IMR-90 (cell line): ENCODE measurements at regions of chr1 and their contacts with region 1.

Region 1: DNA sequence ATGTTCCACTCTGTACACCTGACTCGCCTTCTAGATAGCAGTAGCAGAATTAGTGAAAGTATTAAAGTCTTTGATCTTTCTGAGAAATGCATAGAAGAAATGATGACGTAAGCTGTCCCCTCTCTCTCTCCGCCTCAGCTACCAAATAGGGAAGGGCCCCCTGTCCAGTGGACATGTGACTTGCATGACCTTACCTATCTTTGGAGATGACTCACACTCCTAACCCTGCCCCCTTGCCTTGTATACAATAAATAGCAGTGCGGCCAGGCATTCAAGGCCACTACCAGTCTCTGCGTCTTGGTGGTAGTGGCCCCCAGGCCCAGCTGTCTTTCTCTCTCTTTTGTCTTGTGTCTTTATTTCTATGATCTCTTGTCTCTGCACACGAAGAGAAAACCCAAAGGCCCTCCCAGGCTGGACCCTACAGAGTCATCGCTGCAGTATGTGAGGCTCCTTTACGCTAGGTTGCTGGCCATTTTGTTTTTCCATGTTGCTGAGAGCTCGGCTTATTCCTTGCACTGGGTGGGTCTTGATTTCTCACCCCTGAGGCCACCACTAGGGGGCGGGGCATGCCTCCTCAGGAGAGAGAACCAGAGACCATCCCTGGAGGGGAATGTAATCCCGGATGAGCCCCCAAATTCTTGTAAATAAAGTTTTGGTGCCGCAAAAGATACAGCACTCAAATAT is 16.0 kb upstream of the ZBTB8B start:
- DNase-seq: no peak
- ATAC-seq: no peak
- H3K4me3 ChIP-seq: no peak overlapping the region
- H3K27ac ChIP-seq: no peak overlapping the region
- H3K4me1 ChIP-seq: 0 out of 2 replicates have a peak, but pooled peaks cover 2% of the 10 kb centered on the region
- H3K27me3 ChIP-seq: peaks cover 4% of the 10 kb centered on the region
- CTCF ChIP-seq: no peak
- POLR2A ChIP-seq: no peak
- RAD21 ChIP-seq: no peak

Region 2: GRCh38 chr1:31991182-31991581 is 457.7 kb before region 1 on chr1:
- CTCF ChIA-PET with region 1: no interaction called
- POLR2A ChIA-PET with region 1: no interaction called
- dilution Hi-C with region 1: no loop called
- in situ Hi-C with region 1: no loop called
- intact Hi-C with region 1: no loop called
- DNase-seq: no peak
- ATAC-seq: no peak
- H3K4me3 ChIP-seq: no peak overlapping the region
- H3K27ac ChIP-seq: no peak overlapping the region
- H3K4me1 ChIP-seq: no peaks in the 10 kb centered on the region
- H3K27me3 ChIP-seq: peaks cover 4% of the 10 kb centered on the region
- CTCF ChIP-seq: no peak
- POLR2A ChIP-seq: no peak
- RAD21 ChIP-seq: no peak

Region 3: DNA sequence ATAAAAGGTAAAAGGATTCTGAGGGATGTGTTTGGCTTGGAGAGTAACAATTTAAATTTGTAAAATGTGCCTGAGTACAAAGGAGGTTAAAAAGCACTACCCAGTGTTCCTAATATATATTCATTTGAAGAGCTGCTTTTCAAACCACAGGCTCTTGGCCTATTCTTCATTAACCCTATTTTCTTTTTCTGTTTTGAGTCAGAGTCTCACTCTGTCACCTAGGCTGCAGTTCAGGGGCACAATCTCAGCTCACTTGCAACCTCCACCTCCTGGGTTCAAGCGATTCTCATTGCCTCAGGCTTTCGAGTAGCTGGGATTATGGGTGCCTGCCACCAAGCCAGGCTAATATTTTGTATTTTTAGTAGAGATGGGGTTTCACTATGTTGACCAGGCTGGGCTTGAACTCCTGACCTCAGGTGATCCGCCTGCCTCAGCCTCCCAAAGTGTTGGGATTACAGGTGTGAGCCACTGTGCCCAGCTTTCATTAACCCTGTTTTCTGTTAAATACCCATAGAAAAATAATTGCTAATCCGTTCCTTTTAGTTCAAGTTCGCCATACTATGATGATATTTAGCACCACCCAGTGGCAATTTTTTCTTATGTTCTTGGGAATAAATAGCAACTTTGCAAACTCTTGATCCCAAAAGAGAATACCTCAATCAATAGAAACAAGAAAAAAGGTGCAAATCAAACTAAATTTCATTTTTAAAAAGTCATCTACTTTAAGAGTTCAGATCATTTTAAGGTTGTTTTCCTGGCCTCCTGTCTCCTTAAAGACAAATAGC is 171.0 kb after region 1 on chr1:
- CTCF ChIA-PET with region 1: no interaction called
- POLR2A ChIA-PET with region 1: no interaction called
- dilution Hi-C with region 1: no loop called
- in situ Hi-C with region 1: no loop called
- intact Hi-C with region 1: loop called (anchors 5 kb)
- DNase-seq: peak; percentile 29
- ATAC-seq: no peak
- H3K4me3 ChIP-seq: no peak overlapping the region
- H3K27ac ChIP-seq: no peak overlapping the region
- H3K4me1 ChIP-seq: no peaks in the 10 kb centered on the region
- H3K27me3 ChIP-seq: no peaks in the 10 kb centered on the region
- CTCF ChIP-seq: peak; percentile 32
- POLR2A ChIP-seq: no peak
- RAD21 ChIP-seq: no peak

Region 4: GRCh38 chr1:32650752-32651460 is 202.0 kb after region 1 on chr1 and contains the start of gene RBBP4:
- CTCF ChIA-PET with region 1: no interaction called
- POLR2A ChIA-PET with region 1: interaction called, 3 read pairs
- dilution Hi-C with region 1: no loop called
- in situ Hi-C with region 1: no loop called
- intact Hi-C with region 1: loop called (anchors 2 kb)
- DNase-seq: peak; percentile 96
- ATAC-seq: peak; percentile 95
- H3K4me3 ChIP-seq: peak within 1 kb of the TSS; percentile 97
- H3K27ac ChIP-seq: peak within 1 kb of the TSS; percentile 96
- H3K4me1 ChIP-seq: peaks cover 3% of the 10 kb centered on the region; the same call in 1 of the 2 replicates
- H3K27me3 ChIP-seq: no peaks in the 10 kb centered on the region
- CTCF ChIP-seq: no peak
- POLR2A ChIP-seq: peak; percentile 5
- RAD21 ChIP-seq: no peak
- total RNA-seq, gene RBBP4: 138 and 161 TPM in 2 replicates

Region 5: DNA sequence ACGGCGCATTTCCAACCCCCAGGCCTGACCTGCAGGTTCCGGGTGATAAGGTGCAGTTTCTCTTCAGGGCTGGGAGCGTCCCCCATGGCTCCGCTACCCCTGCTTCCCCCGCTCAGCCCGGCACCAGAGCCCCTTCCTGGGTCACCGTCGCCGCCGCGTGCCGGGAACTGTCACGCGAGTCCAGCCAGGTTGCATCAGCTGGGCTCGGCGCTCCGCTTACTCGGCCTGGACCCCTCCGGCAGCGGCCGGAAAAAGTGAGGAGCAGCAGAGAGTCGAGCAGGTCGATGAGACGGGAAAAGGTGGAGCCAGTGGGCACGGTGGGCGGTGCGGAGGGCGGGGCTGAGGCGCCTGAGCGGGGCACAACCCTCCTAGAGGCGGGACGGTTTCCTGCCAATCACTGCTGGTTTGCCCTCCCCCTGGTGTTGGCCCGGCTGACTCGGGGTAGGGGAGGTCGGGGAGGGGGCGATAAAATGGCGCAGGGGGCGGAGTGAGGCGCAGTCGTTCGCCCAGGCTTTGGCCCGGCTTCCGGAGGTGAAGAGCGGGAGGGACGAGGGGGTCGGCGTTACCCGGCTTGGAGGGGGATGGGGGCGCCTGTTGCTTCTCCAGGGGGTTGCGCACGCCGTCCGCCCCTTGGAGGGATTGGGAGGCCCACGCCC is 368.4 kb after region 1 on chr1 and contains the starts of genes S100PBP and YARS1:
- CTCF ChIA-PET with region 1: no interaction called
- POLR2A ChIA-PET with region 1: no interaction called
- dilution Hi-C with region 1: no loop called
- in situ Hi-C with region 1: no loop called
- intact Hi-C with region 1: no loop called
- DNase-seq: peak; percentile 97
- ATAC-seq: peak; percentile 95
- H3K4me3 ChIP-seq: peak within 1 kb of the TSS; percentile 88
- H3K27ac ChIP-seq: peak within 1 kb of the TSS; percentile 95
- H3K4me1 ChIP-seq: peaks cover 6% of the 10 kb centered on the region
- H3K27me3 ChIP-seq: no peaks in the 10 kb centered on the region
- CTCF ChIP-seq: no peak
- POLR2A ChIP-seq: peak; percentile 80
- RAD21 ChIP-seq: no peak
- total RNA-seq, gene S100PBP: 20.3 and 25.8 TPM in 2 replicates
- total RNA-seq, gene YARS1: 149 and 166 TPM in 2 replicates

Region 6: GRCh38 chr1:32876341-32877210 is 427.7 kb after region 1 on chr1:
- CTCF ChIA-PET with region 1: no interaction called
- POLR2A ChIA-PET with region 1: no interaction called
- dilution Hi-C with region 1: no loop called
- in situ Hi-C with region 1: no loop called
- intact Hi-C with region 1: loop called (anchors 2 kb)
- DNase-seq: no peak
- ATAC-seq: peak; percentile 58
- H3K4me3 ChIP-seq: no peak overlapping the region
- H3K27ac ChIP-seq: no peak overlapping the region
- H3K4me1 ChIP-seq: no peaks in the 10 kb centered on the region
- H3K27me3 ChIP-seq: peaks cover 23% of the 10 kb centered on the region
- CTCF ChIP-seq: peak; percentile 58
- POLR2A ChIP-seq: no peak
- RAD21 ChIP-seq: peak; percentile 51